Activated naive CD4-positive, alpha-beta T cell treated with anti-CD3 and anti-CD28 coated beads for 36 hours (primary cell): ENCODE measurements at regions of chr10 and their contacts with region 1.

Region 1: DNA sequence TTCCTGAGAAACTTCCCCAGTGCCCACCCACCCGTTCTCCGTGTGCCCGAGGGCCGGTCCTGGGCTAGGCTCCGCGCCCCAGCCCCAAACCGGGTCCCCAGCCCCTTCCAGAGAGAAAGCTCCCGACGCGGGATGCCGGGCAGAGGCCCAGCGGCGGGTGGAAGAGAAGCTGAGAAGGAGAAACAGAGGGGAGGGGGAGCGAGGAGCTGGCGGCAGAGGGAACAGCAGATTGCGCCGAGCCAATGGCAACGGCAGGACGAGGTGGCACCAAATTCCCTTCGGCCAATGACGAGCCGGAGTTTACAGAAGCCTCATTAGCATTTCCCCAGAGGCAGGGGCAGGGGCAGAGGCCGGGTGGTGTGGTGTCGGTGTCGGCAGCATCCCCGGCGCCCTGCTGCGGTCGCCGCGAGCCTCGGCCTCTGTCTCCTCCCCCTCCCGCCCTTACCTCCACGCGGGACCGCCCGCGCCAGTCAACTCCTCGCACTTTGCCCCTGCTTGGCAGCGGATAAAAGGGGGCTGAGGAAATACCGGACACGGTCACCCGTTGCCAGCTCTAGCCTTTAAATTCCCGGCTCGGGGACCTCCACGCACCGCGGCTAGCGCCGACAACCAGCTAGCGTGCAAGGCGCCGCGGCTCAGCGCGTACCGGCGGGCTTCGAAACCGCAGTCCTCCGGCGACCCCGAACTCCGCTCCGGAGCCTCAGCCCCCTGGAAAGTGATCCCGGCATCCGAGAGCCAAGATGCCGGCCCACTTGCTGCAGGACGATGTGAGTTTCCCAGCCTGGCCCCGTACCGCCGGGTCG is at the start of gene SCD:
- DNase-seq: peak; percentile 95
- H3K4me3 Mint-ChIP-seq: peak within 1 kb of the TSS; percentile 97
- H3K27ac Mint-ChIP-seq: peak within 1 kb of the TSS; percentile 87
- H3K4me1 Mint-ChIP-seq: peaks cover 45% of the 10 kb centered on the region
- H3K27me3 Mint-ChIP-seq: no peaks in the 10 kb centered on the region
- total RNA-seq, gene SCD: 161 to 169 TPM

Region 2: DNA sequence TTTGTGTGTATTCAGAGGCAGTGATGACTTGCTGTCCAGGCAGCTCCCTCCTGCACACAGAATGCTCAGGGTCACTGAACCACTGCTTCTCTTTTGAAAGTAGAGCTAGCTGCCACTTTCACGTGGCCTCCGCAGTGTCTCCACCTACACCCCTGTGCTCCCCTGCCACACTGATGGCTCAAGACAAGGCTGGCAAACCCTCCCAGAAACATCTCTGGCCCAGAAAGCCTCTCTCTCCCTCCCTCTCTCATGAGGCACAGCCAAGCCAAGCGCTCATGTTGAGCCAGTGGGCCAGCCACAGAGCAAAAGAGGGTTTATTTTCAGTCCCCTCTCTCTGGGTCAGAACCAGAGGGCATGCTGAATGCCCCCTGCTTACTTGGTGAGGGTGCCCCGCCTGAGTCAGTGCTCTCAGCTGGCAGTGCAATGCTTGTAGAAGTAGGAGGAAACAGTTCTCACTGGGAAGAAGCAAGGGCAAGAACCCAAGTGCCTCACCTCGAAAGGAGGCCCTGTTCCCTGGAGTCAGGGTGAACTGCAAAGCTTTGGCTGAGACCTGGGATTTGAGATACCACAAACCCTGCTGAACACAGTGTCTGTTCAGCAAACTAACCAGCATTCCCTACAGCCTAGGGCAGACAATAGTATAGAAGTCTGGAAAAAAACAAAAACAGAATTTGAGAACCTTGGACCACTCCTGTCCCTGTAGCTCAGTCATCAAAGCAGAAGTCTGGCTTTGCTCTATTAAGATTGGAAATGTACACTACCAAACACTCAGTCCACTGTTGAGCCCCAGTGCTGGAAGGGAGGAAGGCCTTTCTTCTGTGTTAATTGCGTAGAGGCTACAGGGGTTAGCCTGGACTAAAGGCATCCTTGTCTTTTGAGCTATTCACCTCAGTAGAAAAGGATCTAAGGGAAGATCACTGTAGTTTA is 15.9 kb after region 1 on chr10:
- CTCF ChIA-PET with region 1: interaction called, 4 read pairs
- intact Hi-C with region 1: loop called (anchors 1 kb)
- DNase-seq: no peak
- H3K4me3 Mint-ChIP-seq: no peak overlapping the region
- H3K27ac Mint-ChIP-seq: no peak overlapping the region
- H3K4me1 Mint-ChIP-seq: peaks cover 9% of the 10 kb centered on the region
- H3K27me3 Mint-ChIP-seq: no peaks in the 10 kb centered on the region

Region 3: DNA sequence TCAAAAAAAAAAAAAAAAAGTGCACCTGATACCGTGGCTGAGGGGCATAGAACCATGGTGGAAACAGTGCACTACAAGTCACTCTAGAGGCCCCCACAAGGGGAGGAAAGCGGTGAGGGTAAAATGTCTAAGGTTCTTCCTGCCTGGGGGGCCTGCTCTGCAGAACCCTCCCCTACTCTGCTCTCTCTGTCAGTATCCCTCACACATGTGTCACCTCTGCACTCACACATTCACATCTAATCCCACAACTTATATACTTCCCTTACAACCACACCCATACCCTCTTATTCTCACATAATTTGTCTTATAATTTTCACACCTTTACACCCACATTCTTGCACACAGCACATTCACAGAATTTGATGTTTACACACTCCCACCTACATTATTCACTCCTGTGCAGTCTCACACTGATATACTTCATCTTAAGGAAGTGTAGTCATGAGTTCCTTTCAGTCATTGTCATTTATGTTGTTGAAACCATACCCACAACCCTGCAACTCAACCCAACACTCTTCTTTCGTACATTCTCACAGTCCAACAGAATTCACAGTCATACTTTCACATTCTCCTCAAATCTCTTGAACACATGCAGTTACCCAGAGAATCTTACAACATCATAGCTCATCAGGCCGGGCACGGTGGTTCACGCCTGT is 330.5 kb after region 1 on chr10:
- CTCF ChIA-PET with region 1: no interaction called
- intact Hi-C with region 1: no loop called
- DNase-seq: no peak
- H3K4me3 Mint-ChIP-seq: no peak overlapping the region
- H3K27ac Mint-ChIP-seq: no peak overlapping the region
- H3K4me1 Mint-ChIP-seq: no peaks in the 10 kb centered on the region
- H3K27me3 Mint-ChIP-seq: peaks cover 40% of the 10 kb centered on the region